ENCODE measurements at regions of chrX and their contacts with region 1.

Region 1: GRCh38 chrX:119791438-119792231 is at the start of gene RPL39:
- DNase-seq: peak; percentile 94
- H3K4me3 Mint-ChIP-seq: peak within 1 kb of the TSS; percentile 93
- H3K27ac Mint-ChIP-seq: peak within 1 kb of the TSS; percentile 97
- H3K4me1 Mint-ChIP-seq: peaks cover 14% of the 10 kb centered on the region
- H3K27me3 Mint-ChIP-seq: no peaks in the 10 kb centered on the region
- total RNA-seq, gene RPL39: 2,109 and 2,135 TPM in 2 replicates

Region 2: GRCh38 chrX:119693040-119693995 is 98.3 kb before region 1 on chrX and contains the start of gene SEPTIN6:
- intact Hi-C with region 1: loop called (anchors 5 kb)
- DNase-seq: peak; percentile 94
- H3K4me3 Mint-ChIP-seq: peak within 1 kb of the TSS; percentile 96
- H3K27ac Mint-ChIP-seq: peak within 1 kb of the TSS; percentile 99
- H3K4me1 Mint-ChIP-seq: peaks cover 4% of the 10 kb centered on the region
- H3K27me3 Mint-ChIP-seq: no peaks in the 10 kb centered on the region
- total RNA-seq, gene SEPTIN6: 151 and 153 TPM in 2 replicates

Region 3: GRCh38 chrX:119826399-119826959 is 34.8 kb after region 1 on chrX:
- intact Hi-C with region 1: loop called (anchors 2 kb)
- DNase-seq: peak; percentile 63
- H3K4me3 Mint-ChIP-seq: no peak overlapping the region
- H3K27ac Mint-ChIP-seq: peak overlapping the region; percentile 45
- H3K4me1 Mint-ChIP-seq: peaks cover 4% of the 10 kb centered on the region
- H3K27me3 Mint-ChIP-seq: no peaks in the 10 kb centered on the region

Region 4: GRCh38 chrX:119852382-119853353 is 61.0 kb after region 1 on chrX and contains the start of gene UPF3B:
- intact Hi-C with region 1: loop called (anchors 1 kb)
- DNase-seq: peak; percentile 97
- H3K4me3 Mint-ChIP-seq: peak within 1 kb of the TSS; percentile 99
- H3K27ac Mint-ChIP-seq: peak within 1 kb of the TSS; percentile 97
- H3K4me1 Mint-ChIP-seq: peaks cover 11% of the 10 kb centered on the region
- H3K27me3 Mint-ChIP-seq: no peaks in the 10 kb centered on the region
- total RNA-seq, gene UPF3B: 12.4 and 12.6 TPM in 2 replicates

Region 5: GRCh38 chrX:119871599-119872395 is 80.2 kb after region 1 on chrX and contains the starts of genes NDUFA1 and RNF113A:
- intact Hi-C with region 1: loop called (anchors 1 kb)
- DNase-seq: peak; percentile 96
- H3K4me3 Mint-ChIP-seq: peak within 1 kb of the TSS; percentile 98
- H3K27ac Mint-ChIP-seq: peak within 1 kb of the TSS; percentile 99
- H3K4me1 Mint-ChIP-seq: peaks cover 5% of the 10 kb centered on the region
- H3K27me3 Mint-ChIP-seq: no peaks in the 10 kb centered on the region
- total RNA-seq, gene NDUFA1: 75.1 and 79.0 TPM in 2 replicates
- total RNA-seq, gene RNF113A: 25.2 and 26.7 TPM in 2 replicates

Region 6: GRCh38 chrX:119880552-119881437 is 89.2 kb after region 1 on chrX:
- intact Hi-C with region 1: loop called (anchors 2 kb)
- DNase-seq: peak; percentile 77
- H3K4me3 Mint-ChIP-seq: no peak overlapping the region
- H3K27ac Mint-ChIP-seq: peak overlapping the region; percentile 41
- H3K4me1 Mint-ChIP-seq: peaks cover 10% of the 10 kb centered on the region
- H3K27me3 Mint-ChIP-seq: no peaks in the 10 kb centered on the region

Region 7: GRCh38 chrX:119943185-119943988 is 151.8 kb after region 1 on chrX and contains the start of gene NKAP:
- intact Hi-C with region 1: loop called (anchors 1 kb)
- DNase-seq: peak; percentile 95
- H3K4me3 Mint-ChIP-seq: peak within 1 kb of the TSS; percentile 91
- H3K27ac Mint-ChIP-seq: peak within 1 kb of the TSS; percentile 97
- H3K4me1 Mint-ChIP-seq: peaks cover 14% of the 10 kb centered on the region
- H3K27me3 Mint-ChIP-seq: peaks cover 2% of the 10 kb centered on the region
- total RNA-seq, gene NKAP: 8.9 and 10.2 TPM in 2 replicates